ENCODE measurements at regions of chr11 and their contacts with region 1.

Region 1: DNA sequence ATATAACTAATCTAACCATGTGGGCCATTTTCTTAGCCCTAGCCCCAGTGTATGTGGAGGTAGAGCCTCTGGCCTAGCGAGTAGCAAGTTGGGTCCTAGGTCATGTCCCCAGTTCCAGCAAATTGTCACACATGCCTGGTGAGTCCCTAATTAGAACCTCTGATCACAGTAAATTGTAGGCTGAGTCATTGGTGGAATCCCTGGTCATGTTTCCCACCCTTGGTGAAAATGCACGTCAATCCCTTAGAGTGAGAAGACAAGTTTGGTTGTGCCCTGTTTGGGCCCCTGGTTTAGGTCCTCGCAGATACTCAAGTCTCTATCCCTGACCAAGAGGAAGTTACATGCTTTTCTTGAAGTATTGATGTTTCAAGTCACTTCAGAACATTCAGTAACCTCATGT is 46.7 kb downstream of the ATM start:
- DNase-seq: no peak
- H3K4me3 Mint-ChIP-seq: no peak overlapping the region
- H3K27ac Mint-ChIP-seq: no peak overlapping the region
- H3K4me1 Mint-ChIP-seq: peaks cover 5% of the 10 kb centered on the region
- H3K27me3 Mint-ChIP-seq: no peaks in the 10 kb centered on the region

Region 2: DNA sequence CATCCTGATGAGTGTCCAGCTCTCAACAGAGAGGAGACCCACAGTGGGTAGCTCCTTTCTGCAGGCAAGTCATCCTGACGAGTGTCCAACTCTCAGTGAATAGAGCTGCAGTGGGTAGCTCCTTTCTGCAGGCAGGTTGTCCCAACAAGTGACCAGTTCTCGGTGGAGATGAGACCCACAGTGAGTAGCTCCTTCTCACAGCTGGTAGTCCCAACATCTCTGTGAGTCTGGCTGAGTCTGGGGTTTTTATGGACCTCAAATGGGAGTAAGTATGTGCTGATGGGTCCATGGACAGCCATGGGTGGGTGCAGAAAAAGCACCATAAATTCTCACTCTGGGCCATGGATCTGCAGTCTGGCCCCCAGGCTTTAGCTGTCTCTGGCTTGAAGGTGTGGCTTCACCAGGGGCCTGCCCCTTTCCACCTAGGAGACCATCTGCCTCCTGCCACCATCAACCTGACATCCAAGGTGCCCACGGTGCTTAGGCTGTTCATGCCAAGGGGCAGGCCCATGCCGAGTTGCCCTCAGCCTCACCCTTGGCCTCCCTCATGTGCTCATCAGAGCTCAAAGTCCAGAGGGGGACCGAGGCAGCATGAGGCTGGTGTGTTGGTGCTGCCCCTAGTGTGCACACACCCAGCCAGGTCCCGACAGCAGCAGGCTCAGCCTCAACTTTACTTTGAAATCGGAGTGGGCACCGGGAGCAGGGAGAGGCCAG is 62.5 kb before region 1 on chr11:
- intact Hi-C with region 1: no loop called
- DNase-seq: no peak
- H3K4me3 Mint-ChIP-seq: no peak overlapping the region
- H3K27ac Mint-ChIP-seq: no peak overlapping the region
- H3K4me1 Mint-ChIP-seq: peaks cover 20% of the 10 kb centered on the region
- H3K27me3 Mint-ChIP-seq: no peaks in the 10 kb centered on the region

Region 3: GRCh38 chr11:108253176-108253575 is 16.4 kb before region 1 on chr11:
- intact Hi-C with region 1: loop called (anchors 2 kb)
- DNase-seq: no peak
- H3K4me3 Mint-ChIP-seq: no peak overlapping the region
- H3K27ac Mint-ChIP-seq: no peak overlapping the region
- H3K4me1 Mint-ChIP-seq: peaks cover 8% of the 10 kb centered on the region
- H3K27me3 Mint-ChIP-seq: no peaks in the 10 kb centered on the region

Region 4: GRCh38 chr11:108393046-108393445 is 123.5 kb after region 1 on chr11:
- intact Hi-C with region 1: no loop called
- DNase-seq: no peak
- H3K4me3 Mint-ChIP-seq: no peak overlapping the region
- H3K27ac Mint-ChIP-seq: no peak overlapping the region
- H3K4me1 Mint-ChIP-seq: no peaks in the 10 kb centered on the region
- H3K27me3 Mint-ChIP-seq: peaks cover 2% of the 10 kb centered on the region